Posterior vena cava (tissue), 2 donors: ENCODE measurements at regions of chr14 and their contacts with region 1.

Region 1: DNA sequence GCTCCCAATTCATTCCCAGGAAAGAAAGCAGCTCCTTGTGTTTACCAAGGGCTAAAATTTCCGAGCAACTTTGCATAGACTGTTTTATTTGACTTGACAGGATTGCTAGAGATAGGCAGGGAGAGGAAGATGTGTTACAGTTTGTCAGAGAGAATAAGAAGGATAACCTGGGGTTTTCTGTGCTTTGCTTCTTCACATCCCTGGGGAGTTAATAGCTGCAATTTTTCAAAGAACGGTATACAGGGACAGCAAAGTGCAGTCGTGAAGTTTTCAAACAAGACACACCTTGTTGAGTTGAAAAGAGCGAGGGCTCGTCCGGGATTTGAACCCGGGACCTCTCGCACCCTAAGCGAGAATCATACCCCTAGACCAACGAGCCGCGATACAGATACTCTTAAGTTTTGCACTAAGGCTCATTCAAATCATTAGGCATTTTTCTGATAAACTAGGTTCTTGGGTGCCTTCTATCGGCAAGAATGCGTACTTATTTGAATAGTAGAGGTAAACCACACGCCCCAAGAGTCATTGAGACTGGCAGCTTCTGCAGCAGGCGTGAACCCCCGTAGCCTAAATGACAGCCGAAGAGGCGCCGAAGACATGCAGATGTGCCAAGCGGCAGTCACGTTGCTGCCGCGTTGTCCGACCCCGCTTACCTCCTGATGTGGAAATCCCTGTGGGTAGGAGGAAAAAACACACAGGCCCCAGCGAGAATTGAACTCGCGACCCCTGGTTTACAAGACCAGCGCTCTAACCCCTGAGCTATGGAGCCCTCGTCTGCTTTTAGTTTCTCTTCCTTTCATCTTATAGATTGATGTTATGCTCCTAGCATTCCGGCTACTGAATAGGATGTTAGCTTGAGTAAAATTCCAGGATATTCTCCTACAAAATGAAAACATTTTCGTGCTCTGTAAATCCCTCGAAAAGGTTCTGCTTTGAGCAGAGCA is 22.2 kb upstream of the RNASE12 start:
- DNase-seq: peak; percentile 93

Region 2: GRCh38 chr14:20327005-20327869 is 286.1 kb before region 1 on chr14:
- intact Hi-C with region 1: loop called (anchors 10 kb)
- DNase-seq: no peak

Region 3: DNA sequence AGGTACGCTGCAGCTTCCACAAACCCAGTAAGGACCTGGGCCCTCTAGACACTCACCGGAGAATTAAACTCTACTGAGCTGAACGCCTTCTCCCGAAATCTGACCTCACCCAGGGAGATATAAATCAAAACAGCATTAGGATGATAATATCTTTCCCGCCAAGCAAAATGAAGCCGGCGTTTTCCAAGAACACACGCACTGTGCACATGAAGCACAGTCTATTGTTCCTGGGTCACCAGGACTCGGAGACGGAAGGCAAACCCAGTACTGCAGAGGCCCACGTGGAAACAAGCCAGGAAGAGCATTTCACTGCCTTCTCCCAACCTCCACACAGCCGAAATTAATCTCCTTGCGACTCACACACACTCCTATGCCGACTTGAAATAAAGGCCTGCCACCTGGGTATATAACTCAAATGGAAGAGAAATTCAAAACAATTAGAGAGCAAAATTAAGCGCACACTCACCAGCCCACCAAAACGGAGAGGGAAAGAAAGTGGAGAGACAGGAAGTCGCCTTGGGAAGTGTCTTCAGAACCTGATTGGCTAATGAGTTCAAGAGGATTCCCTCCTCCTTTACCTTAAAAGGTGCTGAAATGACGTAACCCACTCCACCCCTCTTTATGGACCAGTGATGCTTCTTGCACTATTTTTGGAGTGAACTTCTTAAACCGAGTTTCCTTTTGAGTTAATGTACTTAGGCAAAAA is 280.4 kb before region 1 on chr14 and contains the start of gene CCNB1IP1:
- intact Hi-C with region 1: loop called (anchors 10 kb)
- DNase-seq: no peak
- total RNA-seq, gene CCNB1IP1: 28.9 to 31.1 TPM

Region 4: DNA sequence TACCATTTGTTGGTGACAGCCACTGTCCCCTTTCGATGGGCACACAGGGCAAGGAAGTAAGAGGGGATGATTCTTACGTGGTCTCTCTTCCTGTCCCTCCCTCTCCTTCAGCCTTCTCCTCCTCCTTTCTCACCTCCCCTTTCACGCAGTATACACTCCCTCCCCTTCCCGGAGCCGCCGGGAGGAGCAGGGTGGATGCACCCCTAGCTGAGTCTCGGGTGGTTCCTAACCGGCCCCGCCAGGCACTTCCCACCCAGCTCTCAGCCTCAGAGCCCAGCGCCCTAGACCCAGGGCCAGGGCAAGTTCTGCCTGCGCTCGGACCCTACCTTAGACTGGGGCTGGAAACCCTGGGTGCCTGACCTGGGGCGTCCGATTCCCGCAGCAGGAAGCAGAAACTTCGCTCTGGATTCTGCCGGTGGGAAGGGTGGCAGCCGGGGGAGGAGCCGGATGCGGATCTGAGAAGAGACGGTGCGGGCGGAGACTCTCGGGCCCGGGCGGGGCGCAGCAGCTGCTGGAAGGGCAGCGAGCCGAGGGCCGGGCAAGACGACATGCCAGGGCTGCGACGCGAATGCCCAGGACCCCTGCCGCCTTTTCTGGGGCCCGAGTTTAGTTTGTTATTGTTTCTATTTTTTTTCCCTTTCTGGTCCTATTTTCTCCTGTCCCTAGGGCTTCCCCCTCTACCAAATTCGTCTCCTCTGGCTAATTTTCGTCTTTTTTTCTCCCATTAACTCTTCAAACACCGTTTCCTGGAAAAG is 200.1 kb before region 1 on chr14 and contains the start of gene TEP1:
- intact Hi-C with region 1: loop called in 1 of 2 experiments (anchors 5 kb)
- DNase-seq: peak; percentile 97
- total RNA-seq, gene TEP1: 36.1 to 38.7 TPM

Region 5: GRCh38 chr14:20461274-20462001 is 151.9 kb before region 1 on chr14 and contains the start of gene PIP4P1:
- intact Hi-C with region 1: loop called in 1 of 2 experiments (anchors 10 kb)
- DNase-seq: peak; percentile 99
- total RNA-seq, gene PIP4P1: 25.3 to 27.5 TPM

Region 6: DNA sequence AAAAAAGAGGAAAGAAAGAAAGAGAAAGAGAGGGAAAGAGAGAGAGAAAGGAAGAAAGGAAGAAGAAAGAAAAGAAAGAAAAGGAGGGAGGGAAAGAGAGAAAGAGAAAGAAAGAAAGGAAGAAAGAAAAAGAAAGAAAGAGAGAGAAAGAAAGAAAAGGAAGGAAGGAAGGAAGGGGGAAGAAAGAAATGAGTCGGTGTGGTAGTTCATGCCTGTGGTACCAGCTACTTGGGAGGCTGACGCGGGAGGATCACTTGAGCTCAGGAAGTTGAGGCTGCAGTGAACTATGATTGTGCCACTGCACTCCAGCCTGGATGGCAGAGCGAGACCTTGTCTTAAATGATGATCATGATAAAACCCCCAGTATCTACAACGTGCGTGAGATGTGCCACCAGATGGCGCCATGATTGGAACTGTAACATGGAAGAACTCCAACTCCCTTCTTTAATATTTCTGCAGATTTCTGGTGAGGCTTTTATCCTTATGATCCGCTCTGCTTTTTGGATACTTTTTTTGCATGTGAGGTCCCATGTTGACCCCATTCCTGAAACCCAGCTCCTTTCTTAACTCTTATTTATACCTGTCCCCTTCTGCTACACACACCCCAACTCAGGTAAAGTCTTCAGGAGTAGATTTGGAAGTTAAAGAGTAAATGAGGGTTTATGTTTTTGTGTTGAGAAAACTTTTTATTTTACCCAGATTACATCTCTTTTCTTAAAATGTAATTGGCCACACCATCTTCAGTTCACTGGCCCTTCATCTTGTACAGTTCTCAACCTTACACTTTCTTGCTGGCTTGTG is 82.4 kb before region 1 on chr14:
- intact Hi-C with region 1: loop called in 1 of 2 experiments (anchors 10 kb)
- DNase-seq: peak; percentile 91

Region 7: GRCh38 chr14:20662968-20663732 is 49.8 kb after region 1 on chr14:
- intact Hi-C with region 1: no loop called
- DNase-seq: no peak

Region 8: DNA sequence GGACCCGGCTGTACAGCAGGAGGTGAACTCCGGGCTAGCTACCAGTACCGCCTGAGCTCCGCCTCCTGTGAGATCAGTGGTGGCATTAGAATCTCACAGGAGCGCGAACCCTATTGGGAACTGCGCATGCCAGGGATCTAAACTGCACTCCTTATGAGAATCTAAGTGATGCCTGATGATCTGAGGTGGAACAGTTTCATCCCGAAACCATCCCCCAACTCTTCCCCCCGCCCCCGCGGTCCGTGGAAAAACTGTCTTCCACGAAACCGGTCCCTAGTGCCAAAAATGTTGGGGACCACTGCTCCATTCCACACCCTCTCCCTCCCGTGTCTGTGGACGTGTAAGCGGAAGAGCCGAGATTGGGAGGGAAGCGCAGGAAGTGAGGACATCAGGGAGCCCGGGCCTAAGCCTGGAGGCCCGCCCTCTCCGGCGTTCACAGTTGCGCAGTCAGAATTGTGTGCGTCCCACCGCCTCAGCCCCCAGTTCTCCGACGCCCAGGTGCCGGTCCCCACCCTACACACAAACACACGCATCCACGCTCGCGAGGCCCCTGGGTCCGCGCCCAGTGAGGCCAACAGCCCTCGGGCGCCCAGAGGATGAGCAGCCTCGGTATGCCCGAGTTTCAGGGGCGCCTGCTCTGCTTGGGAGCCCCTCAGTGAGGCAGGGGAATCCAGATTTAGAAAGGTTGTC is 69.2 kb after region 1 on chr14:
- intact Hi-C with region 1: loop called (anchors 5 kb)
- DNase-seq: peak; percentile 96

Region 9: DNA sequence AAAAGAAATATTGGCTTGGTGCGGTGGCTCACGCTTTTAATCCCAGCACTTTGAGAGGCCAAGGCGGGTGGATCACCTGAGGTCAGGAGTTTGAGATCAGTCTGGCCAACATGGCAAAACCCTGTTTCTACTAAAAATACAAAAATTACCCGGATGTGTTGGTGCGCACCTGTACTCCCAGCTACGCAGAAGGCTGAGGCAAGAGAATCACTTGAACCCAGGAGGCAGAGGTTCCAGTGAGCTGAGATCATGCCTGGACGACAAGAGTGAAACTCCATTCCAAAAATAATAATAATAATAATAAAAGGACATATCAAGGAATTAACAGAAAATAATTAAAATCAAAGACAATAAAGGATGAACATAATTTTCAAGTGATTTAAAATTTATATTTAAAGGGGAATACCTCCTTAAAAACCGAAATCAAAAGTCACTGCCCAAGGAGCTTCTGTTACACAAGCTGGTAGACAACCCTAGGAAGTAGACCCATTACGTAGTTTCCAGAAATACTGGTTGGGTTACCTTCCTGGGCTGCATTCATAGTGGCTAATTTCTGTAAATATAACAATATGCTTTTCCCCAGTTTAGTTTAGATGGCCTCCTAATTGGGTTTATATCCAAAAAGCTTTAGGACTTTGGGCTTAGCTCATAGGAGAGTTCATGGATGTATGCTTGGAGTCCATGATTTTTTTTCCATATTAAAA is 130.0 kb after region 1 on chr14:
- intact Hi-C with region 1: no loop called
- DNase-seq: no peak